ENCODE measurements at regions of chr1 and their contacts with region 1.

Region 1: GRCh38 chr1:28056129-28056925 is 32.1 kb downstream of the EYA3 start:
- DNase-seq: no peak
- H3K27ac ChIP-seq: no peak overlapping the region
- CTCF ChIP-seq: no peak

Region 2: GRCh38 chr1:29105839-29106238 is 1049.5 kb after region 1 on chr1:
- CTCF ChIA-PET with region 1: no interaction called
- POLR2A ChIA-PET with region 1: interaction called, 16 read pairs
- DNase-seq: no peak
- H3K27ac ChIP-seq: no peak overlapping the region
- CTCF ChIP-seq: no peak